Activated CD8-positive, alpha-beta T cell treated with anti-CD3 and anti-CD28 coated beads for 36 hours (primary cell): ENCODE measurements at regions of chr1 and their contacts with region 1.

Region 1: DNA sequence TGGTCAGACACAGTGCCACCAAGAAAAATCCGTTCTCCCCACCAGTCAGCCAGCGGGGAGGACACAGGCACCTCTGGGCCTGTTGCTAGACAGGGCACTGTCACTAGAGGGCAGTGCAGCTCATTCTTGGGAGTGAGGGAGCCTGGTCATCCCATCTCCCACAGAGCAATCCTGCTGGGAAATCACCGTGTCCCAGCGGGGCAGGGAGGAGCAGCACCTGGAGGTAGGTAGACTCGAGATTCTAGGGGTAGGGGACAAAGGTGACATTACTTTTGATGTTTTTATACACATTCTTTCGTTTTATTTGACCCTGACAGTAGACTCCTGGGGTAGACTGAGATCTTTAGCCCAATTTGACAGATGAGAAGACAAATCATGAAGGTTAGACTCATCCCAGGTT is 6.7 kb upstream of the CAMK1G start:
- DNase-seq: peak; percentile 78
- ATAC-seq: peak; percentile 97
- H3K4me3 Mint-ChIP-seq: no peak overlapping the region
- H3K27ac Mint-ChIP-seq: no peak overlapping the region
- H3K4me1 Mint-ChIP-seq: no peaks in the 10 kb centered on the region
- H3K27me3 Mint-ChIP-seq: peaks cover 3% of the 10 kb centered on the region
- CTCF ChIP-seq: peak; percentile 95

Region 2: DNA sequence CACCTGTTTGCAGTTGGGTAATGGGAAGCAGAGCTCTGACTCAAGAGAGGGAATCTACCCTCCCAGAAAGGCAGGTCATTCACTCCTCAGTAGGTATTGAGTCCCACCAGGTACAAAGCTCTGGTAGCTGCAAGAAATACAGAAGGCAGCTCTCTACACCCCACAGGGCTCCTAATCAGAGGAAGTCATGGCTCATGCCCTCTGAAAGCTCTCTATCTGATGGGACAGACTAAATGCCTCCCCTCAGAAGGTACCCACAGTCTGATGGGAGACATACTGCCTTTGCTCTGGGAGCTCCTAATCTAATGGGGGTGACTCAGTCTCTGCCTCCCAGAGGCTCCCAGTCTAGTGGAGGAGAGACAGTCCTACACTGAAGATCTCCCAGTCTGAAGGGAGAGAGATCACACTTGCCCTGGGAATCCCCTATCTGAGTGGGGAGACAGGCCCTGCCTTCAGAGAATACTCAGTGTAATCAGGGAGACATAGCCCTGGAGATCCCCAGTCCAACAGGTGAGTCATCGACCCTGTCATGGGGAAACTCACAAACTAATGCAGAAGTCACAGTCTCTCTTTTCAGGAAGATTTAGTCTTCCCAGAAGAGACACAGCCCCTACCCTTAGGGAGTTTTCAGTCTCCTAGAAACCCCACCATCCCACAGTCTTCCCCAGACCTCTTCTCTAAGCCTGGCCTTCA is 30.4 kb after region 1 on chr1:
- CTCF ChIA-PET with region 1: interaction called, 15 read pairs
- POLR2A ChIA-PET with region 1: interaction called, 3 read pairs
- intact Hi-C with region 1: no loop called
- DNase-seq: peak; percentile 68
- ATAC-seq: peak; percentile 95
- H3K4me3 Mint-ChIP-seq: no peak overlapping the region
- H3K27ac Mint-ChIP-seq: peak overlapping the region; percentile 44
- H3K4me1 Mint-ChIP-seq: no peaks in the 10 kb centered on the region
- H3K27me3 Mint-ChIP-seq: no peaks in the 10 kb centered on the region
- CTCF ChIP-seq: no peak

Region 3: GRCh38 chr1:209733409-209734192 is 156.8 kb after region 1 on chr1:
- CTCF ChIA-PET with region 1: no interaction called
- POLR2A ChIA-PET with region 1: no interaction called
- intact Hi-C with region 1: no loop called
- DNase-seq: no peak
- ATAC-seq: no peak
- H3K4me3 Mint-ChIP-seq: no peak overlapping the region
- H3K27ac Mint-ChIP-seq: no peak overlapping the region
- H3K4me1 Mint-ChIP-seq: peaks cover 38% of the 10 kb centered on the region
- H3K27me3 Mint-ChIP-seq: no peaks in the 10 kb centered on the region
- CTCF ChIP-seq: no peak